ENCODE measurements at regions of chr6 and their contacts with region 1.

Region 1: DNA sequence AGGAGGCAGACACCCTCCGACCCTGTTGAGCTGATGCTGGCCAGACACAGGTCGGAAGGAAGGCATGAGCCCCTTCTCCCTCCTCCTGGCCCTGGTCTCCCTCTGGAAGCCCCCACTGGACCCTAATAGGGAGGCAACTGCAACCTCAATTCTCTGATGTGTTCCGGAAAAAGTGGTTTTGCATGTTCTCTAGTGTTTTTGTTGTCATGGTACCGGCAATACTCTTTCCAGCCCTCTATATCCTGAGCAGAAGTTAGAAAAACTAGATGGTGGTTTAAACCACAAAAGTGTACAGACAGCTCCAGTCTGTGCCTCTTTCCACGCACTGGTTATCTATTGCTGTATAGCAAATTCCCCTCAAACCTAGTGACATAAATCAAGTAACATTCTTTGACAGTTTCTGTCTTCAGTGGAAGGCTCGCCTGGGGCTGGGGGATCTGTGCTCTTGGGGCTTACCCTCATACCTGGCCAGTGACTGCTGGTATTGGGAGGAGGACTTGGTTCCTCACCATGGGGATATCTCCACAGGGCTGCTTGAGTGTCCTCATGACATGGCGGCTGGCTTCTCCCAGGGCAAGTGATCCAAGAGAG is 37.0 kb downstream of the SYTL3 start:
- DNase-seq: no peak
- H3K4me3 ChIP-seq: no peak overlapping the region
- CTCF ChIP-seq: no peak

Region 2: DNA sequence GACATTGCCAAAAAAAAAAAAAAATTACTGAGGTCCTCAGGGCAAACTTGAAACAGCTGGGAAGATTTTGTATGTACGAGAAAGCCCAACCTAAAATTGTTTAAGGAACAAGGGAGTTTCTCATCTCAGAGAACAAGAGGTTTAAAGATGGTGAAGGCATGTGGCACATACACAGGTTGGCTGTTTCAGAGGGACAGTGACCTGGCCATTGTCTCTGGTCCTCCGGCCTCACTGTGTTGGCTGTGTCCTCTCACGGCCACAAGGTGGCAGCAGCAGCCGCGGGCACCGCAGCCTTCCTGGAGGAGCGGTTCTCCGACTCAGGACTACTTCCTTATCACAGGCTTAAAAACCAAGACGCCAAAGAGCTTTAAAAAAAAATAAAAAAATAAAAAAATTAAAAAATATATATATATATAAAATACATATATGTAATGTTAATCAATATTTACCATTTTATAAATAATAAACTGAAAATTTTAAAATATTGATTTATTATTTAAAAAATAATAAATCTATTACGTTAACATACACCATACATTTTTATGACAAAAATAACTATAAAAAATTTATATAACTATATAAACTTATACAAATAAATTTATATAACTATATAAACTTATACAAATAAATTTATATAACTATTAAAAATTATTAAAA is 466.0 kb before region 1 on chr6:
- CTCF ChIA-PET with region 1: interaction called, 43 read pairs
- POLR2A ChIA-PET with region 1: no interaction called
- DNase-seq: no peak
- H3K4me3 ChIP-seq: no peak overlapping the region
- CTCF ChIP-seq: peak; percentile 95

Region 3: DNA sequence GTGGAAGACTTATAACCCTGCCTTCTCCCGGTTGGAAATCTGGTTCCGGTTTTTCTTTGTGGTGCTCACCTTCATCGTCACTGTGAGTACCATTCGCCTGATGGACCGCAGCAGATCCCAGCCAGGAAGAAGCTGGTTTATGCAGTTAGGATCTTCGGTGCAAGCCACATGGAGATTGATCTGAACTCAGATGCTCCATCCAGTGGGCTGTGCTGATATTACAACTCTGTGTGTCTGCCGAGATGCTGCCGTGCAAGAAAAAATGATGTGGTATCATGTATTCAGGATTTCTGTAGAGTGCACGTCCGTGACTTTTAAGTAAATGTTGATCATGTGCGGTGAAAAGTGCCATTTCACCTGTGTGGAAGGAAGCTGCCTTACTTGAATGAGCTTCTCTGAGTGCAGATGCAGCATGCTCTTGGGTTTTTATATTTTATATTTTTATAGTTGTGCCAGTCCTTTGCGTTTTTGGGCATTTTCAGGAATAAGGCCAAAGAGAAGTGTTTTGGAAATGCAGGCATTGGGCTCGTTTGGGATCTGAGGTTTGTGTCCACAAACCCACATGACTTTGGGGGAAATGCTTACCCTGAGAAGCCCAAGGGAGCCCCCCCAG is 81.5 kb before region 1 on chr6:
- CTCF ChIA-PET with region 1: interaction called, 11 read pairs
- POLR2A ChIA-PET with region 1: no interaction called
- DNase-seq: peak; percentile 29
- H3K4me3 ChIP-seq: no peak overlapping the region
- CTCF ChIP-seq: peak; percentile 73

Region 4: DNA sequence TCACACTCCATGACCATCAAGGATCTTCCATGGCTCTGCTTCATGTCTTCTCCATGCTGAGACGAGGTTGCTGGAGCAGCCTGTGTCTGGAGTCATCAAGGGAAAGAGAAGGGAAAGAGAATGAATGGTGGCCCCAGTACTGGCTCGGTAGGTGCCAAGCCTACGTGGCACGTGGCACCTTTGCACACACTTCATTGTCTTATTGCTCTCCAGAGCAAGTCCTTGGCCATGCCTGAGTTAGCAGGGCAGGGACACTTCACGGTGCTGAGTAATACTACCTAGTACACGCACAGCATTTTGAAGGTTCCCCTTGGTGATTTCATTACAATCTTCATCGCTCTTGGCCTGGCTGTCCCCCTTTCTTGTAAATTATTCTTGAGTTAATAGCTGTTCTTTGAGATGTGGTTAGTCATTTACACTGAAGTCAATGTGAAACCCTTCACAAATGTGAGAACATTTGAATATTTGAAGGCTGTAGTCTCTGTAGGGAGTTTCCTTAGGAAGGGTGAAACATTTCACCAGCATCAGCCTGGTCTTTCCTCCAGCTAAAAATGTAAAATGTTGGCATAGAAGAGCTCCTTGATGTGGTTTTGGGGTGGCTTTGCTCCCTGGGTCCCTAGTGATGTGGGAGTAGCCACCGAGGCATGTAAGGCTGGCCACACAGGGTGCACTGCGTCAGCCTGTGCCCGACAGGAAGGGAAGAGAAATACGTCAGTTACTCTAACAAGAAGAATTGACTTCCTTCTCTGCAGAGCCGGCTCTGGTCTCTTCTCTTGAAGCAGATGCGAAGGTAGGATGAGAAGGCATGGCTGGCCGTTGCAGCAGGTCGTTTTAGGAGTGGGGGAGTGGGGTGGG is 37.4 kb before region 1 on chr6 and contains the start of gene SYTL3:
- CTCF ChIA-PET with region 1: interaction called, 29 read pairs
- POLR2A ChIA-PET with region 1: interaction called, 6 read pairs
- DNase-seq: peak; percentile 69
- H3K4me3 ChIP-seq: no peak within 1 kb of the TSS
- CTCF ChIP-seq: no peak

Region 5: GRCh38 chr6:158666628-158667359 is 20.1 kb before region 1 on chr6:
- CTCF ChIA-PET with region 1: interaction called, 22 read pairs
- POLR2A ChIA-PET with region 1: no interaction called
- DNase-seq: peak; percentile 73
- H3K4me3 ChIP-seq: no peak overlapping the region
- CTCF ChIP-seq: no peak

Region 6: DNA sequence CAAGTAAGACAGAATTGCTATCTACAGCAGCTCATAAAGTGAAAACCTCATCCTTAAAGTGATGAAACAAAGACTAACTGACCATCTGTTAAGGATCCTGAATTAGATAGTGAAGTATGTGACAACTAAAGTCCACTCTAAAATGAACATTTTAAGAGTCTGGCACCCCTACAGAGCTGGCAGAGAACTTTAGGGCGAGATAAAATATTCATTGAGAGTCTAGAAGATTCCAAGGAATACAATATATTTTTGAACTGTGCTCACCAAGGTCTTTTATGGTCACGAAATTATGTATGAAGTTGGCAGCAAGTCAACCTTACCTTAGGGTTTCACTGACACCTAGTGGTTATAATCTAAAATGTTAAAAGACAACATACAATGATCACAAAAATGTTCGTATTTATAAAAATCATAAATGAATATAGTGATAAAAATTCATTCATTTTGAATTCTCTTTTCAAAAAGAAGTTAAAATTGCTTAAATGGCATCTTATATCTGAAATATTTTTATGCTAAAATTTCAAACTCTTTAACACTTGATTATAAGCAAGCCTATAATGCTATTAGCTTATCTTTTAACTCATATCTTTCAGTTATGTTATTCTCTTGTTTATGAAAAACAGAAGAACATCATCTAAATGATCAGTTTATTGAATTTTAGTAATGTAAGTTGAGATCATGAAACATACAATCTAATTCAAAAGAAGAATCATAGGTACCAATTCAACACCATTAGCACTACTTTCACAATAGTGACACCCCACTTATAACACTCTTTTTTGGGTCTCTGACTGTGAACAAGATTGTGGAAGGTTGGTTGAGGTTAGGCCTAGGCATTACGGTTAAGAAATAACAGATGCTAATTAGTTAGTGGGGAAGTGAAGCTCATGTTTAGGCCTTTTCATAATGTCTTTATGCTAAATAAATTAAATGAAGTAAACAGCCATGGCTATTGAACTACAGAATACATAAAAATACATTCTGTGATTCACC is 285.7 kb after region 1 on chr6:
- CTCF ChIA-PET with region 1: interaction called, 31 read pairs
- POLR2A ChIA-PET with region 1: no interaction called
- DNase-seq: no peak
- H3K4me3 ChIP-seq: no peak overlapping the region
- CTCF ChIP-seq: no peak